Right ventricle myocardium inferior (tissue), 1 donor: ENCODE measurements at regions of chr20 and their contacts with region 1.

Region 1: GRCh38 chr20:17504898-17505635 is 26.1 kb downstream of the BFSP1 start:
- DNase-seq: peak; percentile 89
- ATAC-seq: peak; percentile 88

Region 2: GRCh38 chr20:17617551-17618223 is 112.6 kb after region 1 on chr20:
- intact Hi-C with region 1: loop called (anchors 1 kb)
- DNase-seq: no peak
- ATAC-seq: peak; percentile 62

Region 3: DNA sequence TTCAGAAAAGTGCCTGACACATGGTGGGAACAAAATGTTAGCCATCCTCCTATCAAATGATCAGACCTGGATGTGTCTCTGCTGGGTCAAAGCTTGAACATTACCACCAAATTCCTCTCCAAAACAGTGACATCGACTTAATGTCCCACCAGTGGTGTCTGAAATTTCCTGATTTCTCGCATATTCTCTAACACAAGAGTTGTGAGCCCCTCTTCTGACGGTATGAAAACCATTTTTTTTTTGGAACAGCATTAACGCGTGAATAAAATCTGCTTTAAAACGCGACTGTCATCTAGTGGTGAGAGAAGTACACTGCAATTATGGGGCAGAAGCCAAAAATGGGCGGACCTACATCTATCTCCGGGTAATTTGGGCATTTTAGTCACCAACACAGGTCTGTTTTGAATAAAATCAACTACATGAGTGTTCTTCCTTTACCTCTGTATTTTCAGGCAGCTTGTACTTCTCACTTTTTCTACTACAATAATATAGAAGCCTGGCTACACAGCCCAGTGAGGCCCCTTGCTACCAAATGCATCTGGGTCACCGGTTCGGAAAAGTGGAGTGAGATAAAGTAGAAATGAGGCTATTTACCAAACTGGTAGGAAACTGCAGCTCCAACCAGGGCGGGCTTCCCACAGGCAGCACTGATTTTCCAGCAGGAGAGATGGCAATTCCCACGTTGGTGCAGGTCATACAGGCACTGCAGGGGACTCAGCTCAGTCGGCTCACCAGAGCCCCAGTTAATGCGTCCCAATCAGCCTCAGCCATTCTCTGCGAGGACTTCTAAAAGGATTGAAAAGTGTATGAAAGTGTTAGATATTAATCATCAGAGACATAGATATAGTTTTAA is 491.1 kb after region 1 on chr20:
- intact Hi-C with region 1: loop called (anchors 2 kb)
- DNase-seq: no peak
- ATAC-seq: peak; percentile 42

Region 4: GRCh38 chr20:18137412-18138265 is 632.6 kb after region 1 on chr20 and contains the starts of genes KAT14 and PET117:
- intact Hi-C with region 1: loop called (anchors 10 kb)
- DNase-seq: peak; percentile 93
- ATAC-seq: peak; percentile 100
- total RNA-seq, gene KAT14: 10.7 TPM
- total RNA-seq, gene PET117: 13.3 TPM

Region 5: DNA sequence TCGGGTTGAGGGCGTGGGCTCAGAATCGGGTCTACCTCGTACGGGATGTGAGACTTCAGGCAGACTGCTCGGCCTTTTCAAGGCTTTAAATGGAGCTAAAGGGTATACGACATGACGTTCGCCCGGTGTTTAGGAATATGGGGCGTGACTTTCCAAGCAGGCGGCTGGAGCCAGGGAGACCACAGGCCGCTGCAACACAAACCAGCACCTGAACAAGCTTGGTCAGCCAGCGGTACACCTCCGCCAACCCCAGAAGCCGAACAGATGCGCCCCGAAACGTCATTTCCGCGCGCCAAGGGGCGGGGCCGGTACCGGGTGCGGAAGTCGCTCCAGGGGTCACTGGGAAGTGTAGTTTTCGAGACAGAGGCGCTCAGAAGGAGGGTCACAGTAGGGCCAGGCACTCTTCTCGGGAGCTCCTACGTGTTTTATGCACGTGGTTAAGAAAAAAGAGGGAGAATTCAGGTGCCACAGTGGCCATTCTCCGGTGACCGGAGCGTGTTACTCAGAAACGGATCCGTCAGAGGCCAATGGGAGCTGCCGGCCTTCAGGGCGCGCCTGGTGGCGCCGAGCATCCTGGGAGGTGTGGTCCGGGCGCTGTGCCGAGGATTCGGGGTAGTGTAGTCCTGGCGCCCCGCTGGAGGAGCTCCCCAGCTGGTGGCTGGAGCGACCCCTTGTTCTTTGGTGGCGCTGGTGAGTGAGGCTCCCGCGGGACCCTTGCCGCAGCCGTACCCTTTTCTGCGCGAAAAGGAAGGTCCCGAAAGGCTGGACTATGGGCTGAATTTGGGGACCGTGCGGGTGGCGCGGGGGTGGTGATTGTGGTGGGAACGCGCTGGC is 783.1 kb after region 1 on chr20 and contains the start of gene ZNF133:
- intact Hi-C with region 1: loop called (anchors 5 kb)
- DNase-seq: peak; percentile 98
- ATAC-seq: peak; percentile 99
- total RNA-seq, gene ZNF133: 7.6 TPM